MCF 10A (cell line): ENCODE measurements at regions of chr9 and their contacts with region 1.

Region 1: DNA sequence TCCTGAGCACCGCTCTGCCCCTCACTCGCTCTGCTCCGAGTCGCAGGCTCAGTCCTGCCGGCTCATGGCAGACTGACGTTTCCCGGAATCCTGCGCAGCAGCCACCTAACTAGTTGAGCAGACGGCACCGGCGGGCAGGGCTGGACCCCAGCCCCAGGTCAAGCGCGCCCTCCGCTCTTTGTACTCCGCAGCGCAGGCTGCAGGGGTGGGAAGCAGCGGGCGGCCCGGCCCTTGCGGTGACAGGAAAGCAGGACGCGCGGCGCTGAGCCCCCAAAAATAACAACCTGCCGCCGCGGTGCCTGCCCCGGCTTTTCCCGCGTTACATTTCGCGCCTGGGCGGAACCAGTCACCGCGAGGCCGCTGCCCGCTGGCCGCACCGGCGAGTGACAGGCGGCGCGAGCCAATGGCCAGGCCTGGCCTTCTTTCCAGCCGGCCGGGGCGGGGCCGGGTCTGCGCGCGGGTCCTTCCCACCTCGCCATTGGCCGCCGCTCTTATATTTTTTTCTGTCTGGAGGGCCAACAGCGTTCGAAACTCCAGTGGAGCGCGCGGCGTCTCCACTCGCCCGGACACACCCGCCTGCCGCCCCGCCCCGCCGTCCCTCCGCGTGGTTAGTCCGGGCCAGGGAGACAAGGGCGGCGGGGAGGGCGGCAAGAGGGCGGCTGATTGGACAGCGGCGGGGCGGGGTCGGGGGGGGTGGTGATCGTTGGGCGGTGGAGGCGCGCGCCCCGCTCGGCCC is at the start of gene ZNF367:
- DNase-seq: peak; percentile 97
- H3K4me3 Mint-ChIP-seq: peak within 1 kb of the TSS; percentile 93
- H3K27ac Mint-ChIP-seq: peak within 1 kb of the TSS; percentile 63
- H3K4me1 Mint-ChIP-seq: peaks cover 22% of the 10 kb centered on the region
- H3K27me3 Mint-ChIP-seq: no peaks in the 10 kb centered on the region
- CTCF ChIP-seq: no peak
- total RNA-seq, gene ZNF367: 1.5 and 2.7 TPM in 2 replicates

Region 2: DNA sequence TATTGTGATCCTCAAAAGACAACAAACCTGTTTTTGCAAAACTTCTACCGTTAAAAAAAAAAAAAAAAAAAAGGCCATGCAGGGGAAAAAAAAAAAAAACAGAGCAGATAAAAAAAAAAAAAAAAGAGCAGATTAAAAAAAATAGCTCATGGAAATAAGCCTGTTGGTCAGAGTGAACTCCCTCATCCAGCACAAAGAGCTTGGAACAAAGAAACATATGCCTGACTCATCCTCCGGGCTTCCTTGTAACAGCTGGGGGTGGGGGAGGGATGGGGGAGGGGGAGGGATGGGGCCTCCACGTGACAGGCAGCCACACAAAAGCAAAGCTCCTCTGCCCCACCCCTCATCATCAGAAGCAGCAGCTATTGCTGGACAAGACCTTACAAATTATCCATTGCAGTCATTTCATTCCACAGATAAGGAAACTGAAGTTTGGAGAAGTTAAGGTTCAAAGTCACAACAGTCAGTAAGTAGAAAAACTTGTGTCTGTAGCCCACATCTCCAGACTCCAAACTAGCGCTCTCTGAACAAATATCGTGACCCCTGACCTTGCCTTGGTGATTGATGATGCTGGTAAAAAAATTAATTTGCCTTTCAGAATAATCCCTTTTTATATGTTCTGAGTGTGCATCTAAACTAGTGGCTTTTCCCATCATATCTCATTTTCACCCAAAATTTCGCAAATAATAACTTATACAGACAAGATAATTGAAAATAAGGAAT is 73.6 kb before region 1 on chr9:
- CTCF ChIA-PET with region 1: no interaction called
- POLR2A ChIA-PET with region 1: interaction called, 3 read pairs
- intact Hi-C with region 1: loop called (anchors 5 kb)
- DNase-seq: peak; percentile 80
- H3K4me3 Mint-ChIP-seq: no peak overlapping the region
- H3K27ac Mint-ChIP-seq: no peak overlapping the region
- H3K4me1 Mint-ChIP-seq: peaks cover 7% of the 10 kb centered on the region
- H3K27me3 Mint-ChIP-seq: no peaks in the 10 kb centered on the region
- CTCF ChIP-seq: no peak

Region 3: GRCh38 chr9:96383165-96383942 is 34.9 kb before region 1 on chr9 and contains the start of gene SLC35D2:
- CTCF ChIA-PET with region 1: no interaction called
- POLR2A ChIA-PET with region 1: interaction called, 17 read pairs
- intact Hi-C with region 1: loop called (anchors 5 kb)
- DNase-seq: peak; percentile 63
- H3K4me3 Mint-ChIP-seq: peak within 1 kb of the TSS; percentile 83
- H3K27ac Mint-ChIP-seq: peak within 1 kb of the TSS; percentile 77
- H3K4me1 Mint-ChIP-seq: peaks cover 20% of the 10 kb centered on the region
- H3K27me3 Mint-ChIP-seq: no peaks in the 10 kb centered on the region
- CTCF ChIP-seq: no peak
- total RNA-seq, gene SLC35D2: 20.8 and 28.0 TPM in 2 replicates

Region 4: DNA sequence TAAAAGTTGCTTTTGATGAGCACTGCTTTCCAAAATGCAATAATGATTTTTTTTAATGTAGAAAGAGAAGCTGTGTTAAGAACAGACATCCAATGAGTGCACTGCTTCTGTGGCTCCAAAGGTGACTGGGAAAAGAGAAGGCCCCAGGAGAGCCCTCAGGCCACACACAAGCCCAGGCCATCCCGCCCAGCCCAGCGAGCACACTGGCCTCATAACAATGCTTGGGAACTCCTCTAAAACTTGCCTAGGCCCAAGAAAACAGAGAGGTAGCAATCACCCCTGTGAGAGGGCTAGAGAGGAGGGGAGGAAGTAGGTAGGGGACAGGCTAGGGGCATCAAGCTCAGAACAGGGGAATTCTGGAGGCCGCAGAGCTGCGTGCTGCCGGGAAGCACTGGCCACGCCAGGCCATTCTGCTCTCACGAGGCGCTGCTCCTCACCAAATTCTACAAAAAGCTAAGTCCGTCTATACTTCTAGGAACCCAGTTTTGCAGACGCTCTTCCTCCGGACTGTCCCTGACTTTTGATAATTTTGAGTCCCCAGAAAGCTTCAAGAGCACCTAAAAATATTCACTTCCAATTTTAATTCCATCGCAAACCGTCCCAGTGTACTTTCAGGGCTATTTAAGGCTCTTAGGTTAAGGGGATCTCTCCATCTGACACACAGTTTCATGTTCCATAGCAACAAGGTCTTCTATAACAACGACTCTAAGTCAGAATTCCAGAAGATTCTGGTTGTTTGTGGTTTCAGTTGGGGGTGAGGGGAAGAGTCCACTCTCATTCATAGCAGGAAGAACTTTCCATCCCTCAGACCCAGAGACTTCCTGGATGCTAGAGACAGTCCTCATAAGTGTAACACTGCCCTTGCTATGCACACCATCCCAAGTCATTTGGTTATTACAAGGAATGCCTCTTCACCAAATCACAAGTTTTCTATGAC is 82.7 kb after region 1 on chr9:
- CTCF ChIA-PET with region 1: no interaction called
- POLR2A ChIA-PET with region 1: no interaction called
- intact Hi-C with region 1: no loop called
- DNase-seq: no peak
- H3K4me3 Mint-ChIP-seq: no peak overlapping the region
- H3K27ac Mint-ChIP-seq: no peak overlapping the region
- H3K4me1 Mint-ChIP-seq: no peaks in the 10 kb centered on the region
- H3K27me3 Mint-ChIP-seq: no peaks in the 10 kb centered on the region
- CTCF ChIP-seq: no peak